Activated CD4-positive, alpha-beta T cell treated with anti-CD3 and anti-CD28 coated beads for 36 hours (primary cell): ENCODE measurements at regions of chr1 and their contacts with region 1.

Region 1: DNA sequence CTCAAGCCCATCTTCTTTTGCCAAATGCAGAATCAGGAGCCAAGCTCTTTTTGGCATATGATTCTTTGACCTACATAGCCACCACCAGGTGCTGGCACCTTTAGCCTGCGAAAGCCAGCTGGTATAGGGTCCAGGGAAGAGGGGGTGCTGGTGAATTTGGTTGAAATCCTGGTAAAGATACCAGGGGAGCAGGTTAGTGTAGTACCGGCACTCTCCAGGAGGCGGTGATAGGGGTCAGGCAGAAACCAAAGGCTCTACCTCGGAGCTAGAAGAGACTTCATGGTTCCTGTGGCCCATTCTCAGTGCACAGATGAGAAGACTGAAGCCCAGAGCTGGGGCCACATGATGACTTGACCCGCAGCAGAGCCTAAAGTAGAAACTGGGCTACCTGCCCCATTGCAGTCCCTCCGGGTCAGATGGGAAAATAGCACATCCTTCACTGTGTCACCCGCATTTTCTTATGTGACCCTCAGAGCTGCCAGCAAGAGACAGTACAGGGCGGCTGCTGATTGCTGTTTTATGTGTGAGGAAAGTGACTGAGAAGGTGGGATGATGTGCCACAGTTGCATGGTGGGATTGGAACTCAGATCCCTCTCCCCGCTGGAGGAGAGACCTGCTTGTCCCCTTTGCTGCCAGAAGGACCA is 36.0 kb upstream of the IL19 start:
- DNase-seq: peak; percentile 89
- ATAC-seq: peak; percentile 52
- H3K4me3 Mint-ChIP-seq: no peak overlapping the region
- H3K27ac Mint-ChIP-seq: no peak overlapping the region
- H3K4me1 Mint-ChIP-seq: peaks cover 55% of the 10 kb centered on the region
- H3K27me3 Mint-ChIP-seq: no peaks in the 10 kb centered on the region

Region 2: GRCh38 chr1:205512059-205513045 is 1222.3 kb before region 1 on chr1:
- CTCF ChIA-PET with region 1: no interaction called
- POLR2A ChIA-PET with region 1: no interaction called
- intact Hi-C with region 1: no loop called
- DNase-seq: no peak
- ATAC-seq: no peak
- H3K4me3 Mint-ChIP-seq: no peak overlapping the region
- H3K27ac Mint-ChIP-seq: no peak overlapping the region
- H3K4me1 Mint-ChIP-seq: no peaks in the 10 kb centered on the region
- H3K27me3 Mint-ChIP-seq: no peaks in the 10 kb centered on the region

Region 3: DNA sequence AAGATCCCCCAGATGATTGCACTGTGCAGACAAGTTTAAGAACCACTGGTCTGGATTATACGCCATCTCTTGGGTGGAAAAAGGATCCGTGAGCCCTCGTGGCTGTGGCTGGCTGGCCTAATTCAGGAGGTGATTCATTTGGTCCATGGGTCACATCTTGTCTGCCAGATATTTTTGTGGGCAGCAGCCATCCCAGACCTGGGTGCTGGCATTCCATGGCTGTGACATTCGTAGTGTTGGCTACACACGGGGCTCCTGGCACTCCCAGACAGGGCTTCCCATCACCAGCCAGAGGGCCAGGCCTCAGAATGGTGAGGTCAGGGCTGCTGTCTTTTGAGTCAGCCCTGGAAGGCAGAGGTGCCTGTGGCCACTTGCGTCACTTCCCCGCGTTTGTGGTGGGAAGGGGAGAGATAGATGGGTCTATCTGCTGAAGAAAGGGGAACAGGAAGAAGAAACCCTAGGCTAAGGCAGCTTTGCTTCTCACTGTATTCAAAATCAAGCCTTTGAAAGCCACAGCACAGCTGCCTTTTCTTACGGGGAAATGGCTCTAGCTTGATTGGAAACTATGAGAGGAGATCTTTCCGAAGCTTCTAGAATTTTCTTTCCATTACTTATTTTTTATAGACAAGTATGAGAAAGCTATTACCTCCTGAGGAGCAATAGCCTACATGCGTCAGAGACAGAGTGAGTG is 154.7 kb before region 1 on chr1:
- CTCF ChIA-PET with region 1: no interaction called
- POLR2A ChIA-PET with region 1: no interaction called
- intact Hi-C with region 1: no loop called
- DNase-seq: peak; percentile 96
- ATAC-seq: peak; percentile 54
- H3K4me3 Mint-ChIP-seq: peak overlapping the region; percentile 72
- H3K27ac Mint-ChIP-seq: peak overlapping the region; percentile 99
- H3K4me1 Mint-ChIP-seq: peaks cover 99% of the 10 kb centered on the region
- H3K27me3 Mint-ChIP-seq: no peaks in the 10 kb centered on the region

Region 4: DNA sequence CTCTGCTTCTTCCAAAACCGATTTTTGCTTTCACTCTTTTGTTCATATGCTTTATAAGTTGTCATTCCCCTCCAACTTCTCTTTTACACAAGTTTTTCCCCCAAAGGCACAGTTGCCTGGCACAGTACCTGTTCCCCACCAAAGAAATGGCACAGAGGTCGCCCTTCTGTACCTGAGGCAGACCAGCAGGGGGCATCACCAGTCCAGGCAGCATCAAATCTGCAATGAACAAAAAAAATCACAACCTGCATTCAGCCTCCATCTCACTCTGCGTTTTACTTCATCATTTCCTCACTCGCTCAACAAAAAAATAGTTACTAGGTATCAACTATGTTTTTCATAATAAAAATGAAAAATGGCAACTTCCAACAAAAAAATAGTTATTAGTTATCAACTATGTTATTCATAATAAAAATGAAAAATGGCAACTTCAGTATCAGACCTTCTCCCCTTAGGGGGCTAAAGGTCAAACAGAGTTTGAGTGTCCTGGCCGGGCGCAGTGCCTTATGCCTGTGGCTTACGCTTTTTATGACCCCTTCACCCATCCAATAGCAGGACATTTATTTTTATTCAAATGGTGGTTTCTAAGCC is 126.4 kb before region 1 on chr1:
- CTCF ChIA-PET with region 1: no interaction called
- POLR2A ChIA-PET with region 1: no interaction called
- intact Hi-C with region 1: no loop called
- DNase-seq: peak; percentile 84
- ATAC-seq: no peak
- H3K4me3 Mint-ChIP-seq: peak overlapping the region; percentile 56
- H3K27ac Mint-ChIP-seq: peak overlapping the region; percentile 90
- H3K4me1 Mint-ChIP-seq: peaks cover 46% of the 10 kb centered on the region
- H3K27me3 Mint-ChIP-seq: no peaks in the 10 kb centered on the region

Region 5: DNA sequence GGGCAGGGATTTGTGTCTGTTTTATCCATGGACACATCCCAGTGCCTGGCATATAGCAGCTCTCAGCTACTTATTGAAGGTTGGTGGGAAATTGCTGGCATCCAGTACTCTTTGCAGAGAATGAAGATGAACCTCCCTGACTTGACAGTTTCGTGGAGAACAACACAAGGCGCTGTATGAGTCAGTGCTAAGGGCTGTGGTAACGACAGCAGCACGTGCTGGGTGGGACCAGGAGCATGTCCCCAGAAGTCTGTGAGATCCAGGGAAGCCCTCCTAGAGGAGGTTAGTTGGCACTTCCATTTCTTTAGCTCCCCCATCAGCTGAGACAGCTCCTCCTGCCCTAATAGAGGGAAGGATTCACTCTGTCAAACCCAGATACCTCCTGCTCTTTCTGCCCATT is 10.1 kb after region 1 on chr1:
- CTCF ChIA-PET with region 1: interaction called, 13 read pairs
- POLR2A ChIA-PET with region 1: no interaction called
- intact Hi-C with region 1: no loop called
- DNase-seq: peak; percentile 45
- ATAC-seq: peak; percentile 50
- H3K4me3 Mint-ChIP-seq: no peak overlapping the region
- H3K27ac Mint-ChIP-seq: no peak overlapping the region
- H3K4me1 Mint-ChIP-seq: peaks cover 51% of the 10 kb centered on the region
- H3K27me3 Mint-ChIP-seq: peaks cover 3% of the 10 kb centered on the region

Region 6: DNA sequence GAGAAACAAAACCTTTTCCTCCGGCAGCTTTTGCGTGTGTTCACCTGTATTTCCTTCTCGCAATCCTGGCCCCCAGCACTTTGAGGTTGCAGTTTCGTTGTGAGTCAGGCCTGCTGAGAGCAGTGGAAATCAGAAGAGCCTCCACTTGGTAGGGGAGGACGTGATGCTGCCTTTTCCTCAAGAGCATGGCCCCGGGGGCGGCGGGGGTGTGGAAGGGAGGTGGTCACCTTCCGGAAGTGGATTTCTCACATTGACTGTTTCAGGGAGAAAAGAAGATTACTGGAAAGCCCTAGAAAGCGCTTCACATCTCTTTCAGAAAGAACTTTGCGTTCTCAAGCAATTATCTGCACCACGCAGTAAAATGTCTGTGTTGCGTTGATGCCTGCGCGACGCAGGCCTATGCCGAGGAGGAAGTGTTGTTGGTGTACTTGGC is 49.9 kb after region 1 on chr1:
- CTCF ChIA-PET with region 1: interaction called, 7 read pairs
- POLR2A ChIA-PET with region 1: no interaction called
- intact Hi-C with region 1: loop called (anchors 1 kb)
- DNase-seq: peak; percentile 94
- ATAC-seq: peak; percentile 85
- H3K4me3 Mint-ChIP-seq: peak overlapping the region; percentile 18
- H3K27ac Mint-ChIP-seq: peak overlapping the region; percentile 71
- H3K4me1 Mint-ChIP-seq: peaks cover 57% of the 10 kb centered on the region
- H3K27me3 Mint-ChIP-seq: peaks cover 22% of the 10 kb centered on the region

Region 7: DNA sequence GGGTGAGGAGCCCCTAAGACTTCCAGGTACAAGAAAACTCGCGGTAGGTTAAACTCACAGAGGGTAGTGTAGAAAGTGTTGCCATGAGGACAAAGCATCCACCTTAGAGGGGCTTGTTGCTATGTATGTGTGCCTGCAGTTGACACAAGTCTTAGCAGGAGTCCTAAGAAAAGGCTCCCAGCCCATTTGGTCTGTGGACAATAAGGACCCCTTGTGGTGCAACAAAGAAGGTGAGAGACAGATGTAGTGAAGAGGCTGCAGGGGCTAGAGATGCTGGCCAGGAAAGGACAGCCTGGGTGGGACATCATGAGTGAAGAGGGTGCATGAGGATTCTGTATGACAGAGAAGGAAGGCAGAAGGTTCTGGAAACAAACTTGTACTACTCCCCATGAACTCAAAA is 74.0 kb after region 1 on chr1:
- CTCF ChIA-PET with region 1: interaction called, 198 read pairs
- POLR2A ChIA-PET with region 1: interaction called, 7 read pairs
- intact Hi-C with region 1: loop called (anchors 1 kb)
- DNase-seq: peak; percentile 63
- ATAC-seq: peak; percentile 83
- H3K4me3 Mint-ChIP-seq: no peak overlapping the region
- H3K27ac Mint-ChIP-seq: no peak overlapping the region
- H3K4me1 Mint-ChIP-seq: peaks cover 39% of the 10 kb centered on the region
- H3K27me3 Mint-ChIP-seq: peaks cover 2% of the 10 kb centered on the region

Region 8: GRCh38 chr1:206925106-206925736 is 190.6 kb after region 1 on chr1:
- CTCF ChIA-PET with region 1: interaction called, 16 read pairs
- POLR2A ChIA-PET with region 1: no interaction called
- intact Hi-C with region 1: no loop called
- DNase-seq: peak; percentile 83
- ATAC-seq: peak; percentile 58
- H3K4me3 Mint-ChIP-seq: no peak overlapping the region
- H3K27ac Mint-ChIP-seq: no peak overlapping the region
- H3K4me1 Mint-ChIP-seq: peaks cover 28% of the 10 kb centered on the region
- H3K27me3 Mint-ChIP-seq: no peaks in the 10 kb centered on the region

Region 9: GRCh38 chr1:207124389-207124788 is 389.8 kb after region 1 on chr1:
- CTCF ChIA-PET with region 1: no interaction called
- POLR2A ChIA-PET with region 1: no interaction called
- intact Hi-C with region 1: no loop called
- DNase-seq: no peak
- ATAC-seq: no peak
- H3K4me3 Mint-ChIP-seq: no peak overlapping the region
- H3K27ac Mint-ChIP-seq: no peak overlapping the region
- H3K4me1 Mint-ChIP-seq: no peaks in the 10 kb centered on the region
- H3K27me3 Mint-ChIP-seq: peaks cover 9% of the 10 kb centered on the region